GM12878 (cell line): ENCODE measurements at regions of chr21 and their contacts with region 1.

Region 1: GRCh38 chr21:17611414-17612022 is 1.2 kb downstream of the BTG3 start:
- DNase-seq: peak; percentile 59
- ATAC-seq: peak; percentile 68
- H3K4me3 ChIP-seq: peak overlapping the region; percentile 100
- H3K27ac ChIP-seq: peak overlapping the region; percentile 70
- H3K4me1 ChIP-seq: peaks cover 4% of the 10 kb centered on the region
- H3K27me3 ChIP-seq: no peaks in the 10 kb centered on the region
- CTCF ChIP-seq: no peak
- EP300 ChIP-seq: 0 out of 4 replicates have a peak, but pooled peaks have one; percentile 13 to 20
- POLR2A ChIP-seq: 0 out of 2 replicates have a peak, but pooled peaks have one; percentile 48
- RAD21 ChIP-seq: no peak

Region 2: GRCh38 chr21:17585875-17586450 is 25.6 kb before region 1 on chr21:
- CTCF ChIA-PET with region 1: interaction called, 12 read pairs
- POLR2A ChIA-PET with region 1: no interaction called
- RAD21 ChIA-PET with region 1: interaction called, 3 read pairs
- SMC1A ChIA-PET with region 1: interaction called, 5 read pairs
- in situ Hi-C with region 1: no loop called
- intact Hi-C with region 1: no loop called
- DNase-seq: no peak
- ATAC-seq: peak; percentile 55; the same call in 2 of the 3 replicates
- H3K4me3 ChIP-seq: no peak overlapping the region
- H3K27ac ChIP-seq: no peak overlapping the region
- H3K4me1 ChIP-seq: no peaks in the 10 kb centered on the region
- H3K27me3 ChIP-seq: no peaks in the 10 kb centered on the region
- CTCF ChIP-seq: peak; percentile 35 to 51 (median 36); a peak in 4 of 6 replicates
- EP300 ChIP-seq: no peak
- POLR2A ChIP-seq: no peak
- RAD21 ChIP-seq: peak; percentile 66

Region 3: GRCh38 chr21:17598437-17598836 is 13.1 kb before region 1 on chr21:
- CTCF ChIA-PET with region 1: interaction called, 17 read pairs
- POLR2A ChIA-PET with region 1: interaction called, 5 read pairs
- RAD21 ChIA-PET with region 1: interaction called, 4 read pairs
- SMC1A ChIA-PET with region 1: interaction called, 41 read pairs
- in situ Hi-C with region 1: no loop called
- intact Hi-C with region 1: no loop called
- DNase-seq: no peak
- ATAC-seq: peak; percentile 83
- H3K4me3 ChIP-seq: no peak overlapping the region
- H3K27ac ChIP-seq: no peak overlapping the region
- H3K4me1 ChIP-seq: peaks cover 5% of the 10 kb centered on the region; the same call in 1 of the 2 replicates
- H3K27me3 ChIP-seq: no peaks in the 10 kb centered on the region
- CTCF ChIP-seq: no peak
- EP300 ChIP-seq: no peak
- POLR2A ChIP-seq: no peak
- RAD21 ChIP-seq: no peak

Region 4: DNA sequence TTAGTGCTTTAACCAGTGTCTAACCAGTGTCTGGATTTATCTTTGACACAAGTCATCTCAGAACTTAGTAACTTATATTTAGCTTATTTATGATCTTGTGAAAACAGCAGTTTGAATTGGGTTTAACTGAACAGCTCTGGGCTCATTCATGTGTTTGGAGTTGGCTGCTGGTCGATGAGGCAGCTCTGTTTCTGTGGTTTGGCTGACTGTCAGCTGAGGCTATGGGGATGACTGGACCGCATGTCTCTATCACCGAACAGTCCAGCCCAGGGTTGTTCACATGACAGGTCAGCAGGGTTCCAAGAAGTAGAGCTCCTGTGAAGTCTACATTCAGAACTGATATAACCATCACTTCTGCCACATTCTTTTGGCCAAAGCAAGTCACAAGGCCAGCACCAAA is 236.7 kb after region 1 on chr21:
- CTCF ChIA-PET with region 1: no interaction called
- POLR2A ChIA-PET with region 1: no interaction called
- RAD21 ChIA-PET with region 1: no interaction called
- SMC1A ChIA-PET with region 1: no interaction called
- in situ Hi-C with region 1: no loop called
- intact Hi-C with region 1: loop called (anchors 2 kb)
- DNase-seq: peak; percentile 84
- ATAC-seq: peak; percentile 98
- H3K4me3 ChIP-seq: no peak overlapping the region
- H3K27ac ChIP-seq: peak overlapping the region; percentile 29; the same call in 1 of the 2 replicates
- H3K4me1 ChIP-seq: peaks cover 17% of the 10 kb centered on the region; the same call in 1 of the 2 replicates
- H3K27me3 ChIP-seq: no peaks in the 10 kb centered on the region
- CTCF ChIP-seq: no peak
- EP300 ChIP-seq: peak; percentile 74 to 95; a peak in 2 of 4 replicates
- POLR2A ChIP-seq: no peak
- RAD21 ChIP-seq: peak; percentile 13; the same call in 1 of the 2 replicates

Region 5: GRCh38 chr21:17889171-17889570 is 277.7 kb after region 1 on chr21:
- CTCF ChIA-PET with region 1: no interaction called
- POLR2A ChIA-PET with region 1: no interaction called
- RAD21 ChIA-PET with region 1: no interaction called
- SMC1A ChIA-PET with region 1: no interaction called
- in situ Hi-C with region 1: no loop called
- intact Hi-C with region 1: no loop called
- DNase-seq: no peak
- ATAC-seq: no peak
- H3K4me3 ChIP-seq: no peak overlapping the region
- H3K27ac ChIP-seq: no peak overlapping the region
- H3K4me1 ChIP-seq: no peaks in the 10 kb centered on the region
- H3K27me3 ChIP-seq: no peaks in the 10 kb centered on the region
- CTCF ChIP-seq: no peak
- EP300 ChIP-seq: no peak
- POLR2A ChIP-seq: no peak
- RAD21 ChIP-seq: no peak